ENCODE measurements at regions of chr1 and their contacts with region 1.

Region 1: GRCh38 chr1:177282976-177283760 is 112.4 kb downstream of the BRINP2 start:
- DNase-seq: no peak

Region 2: DNA sequence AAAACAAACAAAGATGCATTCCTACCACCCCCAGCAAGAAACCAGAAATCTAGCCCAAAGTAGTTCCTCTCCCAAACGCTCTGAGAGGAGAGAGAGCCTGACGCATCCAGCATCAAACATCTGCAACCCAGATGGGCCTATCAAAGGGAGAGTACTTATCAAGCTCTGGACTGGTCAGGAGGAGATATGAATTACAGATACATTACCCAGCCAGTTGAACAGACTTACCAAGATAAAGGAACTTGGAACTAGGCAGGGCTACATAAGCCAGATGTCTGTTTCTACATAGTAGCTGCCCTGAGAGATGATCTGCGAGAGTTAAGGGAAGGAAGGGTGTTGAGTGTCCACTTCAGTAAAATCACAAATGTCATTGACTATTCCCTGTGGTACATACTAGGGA is 681.8 kb before region 1 on chr1:
- intact Hi-C with region 1: no loop called
- DNase-seq: no peak

Region 3: GRCh38 chr1:177307771-177308170 is 24.6 kb after region 1 on chr1:
- intact Hi-C with region 1: loop called in 1 of 2 experiments (anchors 1 kb)
- DNase-seq: no peak

Region 4: DNA sequence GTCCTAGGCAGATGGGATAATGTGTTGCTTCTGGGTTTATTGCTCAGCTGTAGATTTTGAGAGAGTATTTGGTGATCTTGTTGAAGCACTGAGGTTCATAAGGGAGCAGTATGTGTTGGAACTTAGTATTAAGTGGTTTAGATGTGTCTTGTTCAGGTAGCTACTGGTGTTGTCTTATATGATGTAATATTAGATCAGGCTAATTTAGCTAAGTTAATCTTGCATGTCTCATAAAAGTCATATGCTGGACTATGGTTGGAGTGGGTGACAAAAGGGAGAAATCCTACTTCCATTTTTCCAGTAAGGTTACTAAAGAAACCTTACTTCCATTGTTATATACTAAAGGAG is 1017.2 kb after region 1 on chr1:
- intact Hi-C with region 1: no loop called
- DNase-seq: no peak